ENCODE measurements at regions of chr1 and their contacts with region 1.

Region 1: DNA sequence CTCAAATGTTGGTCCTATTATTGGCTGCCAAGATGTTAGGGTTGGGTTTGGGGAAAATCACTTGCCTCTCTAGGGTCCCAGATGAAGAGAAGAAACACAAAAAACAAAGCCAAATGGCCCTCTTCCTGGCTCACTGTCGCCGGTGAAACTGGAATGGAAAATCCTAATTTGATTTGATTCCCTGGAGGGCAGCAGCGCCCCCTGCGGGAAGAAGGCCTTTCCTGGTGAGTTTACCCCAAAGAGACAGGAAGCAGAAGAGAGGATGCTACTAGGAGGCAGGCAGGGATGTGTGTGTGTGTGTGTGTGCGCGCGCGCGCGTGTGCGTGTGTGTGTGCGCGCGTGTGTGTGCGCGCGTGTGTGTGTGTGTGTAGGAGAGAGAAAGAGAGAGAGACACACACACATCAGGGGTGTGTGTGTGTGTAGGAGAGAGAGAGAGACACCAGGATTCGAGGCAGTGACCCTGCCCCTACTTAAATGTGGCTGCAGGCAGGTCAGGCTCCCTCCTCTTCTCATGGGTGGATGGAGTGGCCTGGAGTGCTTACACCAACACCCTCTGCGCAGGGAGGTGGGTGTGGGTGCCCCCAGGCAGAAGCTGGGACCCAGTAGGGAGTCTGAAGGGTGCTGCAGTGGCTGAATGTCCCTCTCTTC is 3.1 kb upstream of the SELENON start:
- DNase-seq: peak; percentile 77 to 97
- H3K4me3 ChIP-seq: no peak overlapping the region
- CTCF ChIP-seq: peak in 1 of 3 donors; percentile 65
- POLR2A ChIP-seq: no peak

Region 2: GRCh38 chr1:25239681-25240541 is 557.0 kb before region 1 on chr1:
- intact Hi-C with region 1: loop called (anchors 10 kb)
- DNase-seq: peak; percentile 91 to 98
- H3K4me3 ChIP-seq: peak overlapping the region; percentile 4
- CTCF ChIP-seq: peak in 1 of 3 donors; percentile 56
- POLR2A ChIP-seq: no peak

Region 3: DNA sequence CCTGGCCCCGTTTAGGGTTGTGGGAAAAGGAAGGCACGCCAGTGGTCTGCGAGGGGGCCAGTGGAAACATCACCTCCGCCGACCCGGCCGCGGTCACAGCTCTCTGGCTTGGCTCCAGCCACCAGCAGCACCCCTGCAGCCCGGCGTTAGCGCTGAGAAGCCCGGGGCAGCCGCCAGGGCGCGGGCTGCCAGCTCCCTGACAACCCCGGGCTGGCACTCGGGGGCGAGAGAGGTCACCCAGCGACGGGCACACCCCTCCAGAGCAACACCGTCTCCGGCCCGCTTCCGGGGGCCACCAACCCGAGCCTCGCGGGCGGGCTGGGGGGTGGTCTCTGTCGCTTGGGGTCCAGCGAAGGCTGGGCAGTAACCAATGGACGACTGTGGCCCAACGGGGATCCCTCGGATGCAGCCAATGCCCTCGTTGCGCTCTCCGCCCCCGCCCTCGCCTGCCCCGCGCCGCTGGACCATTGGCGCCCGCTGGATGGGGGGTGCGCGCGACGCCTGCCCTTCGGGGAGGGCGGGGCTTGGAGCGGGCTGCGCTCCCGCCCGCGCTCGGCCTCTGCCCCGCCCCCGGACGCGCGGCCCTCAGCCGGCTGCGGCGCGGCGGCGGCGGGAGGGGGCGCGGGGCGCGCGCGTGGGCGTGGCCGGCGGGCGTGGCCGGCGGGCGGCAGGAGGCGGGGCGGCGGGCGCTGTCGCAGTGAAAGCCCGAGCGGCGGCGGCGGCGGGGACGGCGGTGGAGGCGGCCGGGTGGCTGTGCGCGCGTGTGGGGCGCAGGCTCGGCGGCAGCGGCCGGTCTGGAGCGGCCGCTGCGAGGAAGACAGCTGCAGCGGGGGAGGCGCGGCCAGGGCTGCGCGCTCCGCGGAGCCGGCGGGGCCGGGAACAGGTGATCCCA is 180.6 kb before region 1 on chr1 and contains the start of gene MAN1C1:
- intact Hi-C with region 1: loop called (anchors 5 kb)
- DNase-seq: peak; percentile 68 to 95
- H3K4me3 ChIP-seq: peak within 1 kb of the TSS; percentile 73
- CTCF ChIP-seq: no peak
- POLR2A ChIP-seq: no peak
- total RNA-seq, gene MAN1C1: 5.9 to 7.3 (median 6.6) TPM

Region 4: GRCh38 chr1:25743826-25744581 is 52.9 kb before region 1 on chr1:
- intact Hi-C with region 1: loop called (anchors 10 kb)
- DNase-seq: peak; percentile 69 to 93
- H3K4me3 ChIP-seq: no peak overlapping the region
- CTCF ChIP-seq: no peak
- POLR2A ChIP-seq: no peak

Region 5: DNA sequence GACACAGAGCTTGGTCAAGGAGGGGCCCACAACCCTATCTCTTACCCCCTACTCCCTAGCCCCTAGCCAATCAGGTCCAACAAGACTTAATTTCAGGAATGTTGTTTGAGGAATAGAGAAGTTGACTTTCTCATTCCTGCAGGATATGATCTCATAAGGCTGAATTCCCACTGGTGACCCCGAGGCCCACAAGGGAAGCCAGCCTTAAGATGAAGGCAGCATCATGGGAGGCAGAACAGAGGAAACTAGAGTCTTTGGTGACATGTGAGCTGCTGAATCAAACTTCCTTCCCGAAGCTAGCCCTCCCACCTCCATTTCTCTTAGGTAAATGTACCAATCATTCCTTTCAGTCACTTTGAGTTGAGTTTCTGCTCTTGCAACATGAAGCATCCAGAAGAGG is 305.6 kb after region 1 on chr1:
- intact Hi-C with region 1: no loop called
- DNase-seq: no peak
- H3K4me3 ChIP-seq: no peak overlapping the region
- CTCF ChIP-seq: no peak
- POLR2A ChIP-seq: no peak

Measured in lower leg skin (tissue), 4 donors.